Posterior cingulate gyrus (tissue), 11 donors: ENCODE measurements at regions of chr2 and their contacts with region 1.

Region 1: DNA sequence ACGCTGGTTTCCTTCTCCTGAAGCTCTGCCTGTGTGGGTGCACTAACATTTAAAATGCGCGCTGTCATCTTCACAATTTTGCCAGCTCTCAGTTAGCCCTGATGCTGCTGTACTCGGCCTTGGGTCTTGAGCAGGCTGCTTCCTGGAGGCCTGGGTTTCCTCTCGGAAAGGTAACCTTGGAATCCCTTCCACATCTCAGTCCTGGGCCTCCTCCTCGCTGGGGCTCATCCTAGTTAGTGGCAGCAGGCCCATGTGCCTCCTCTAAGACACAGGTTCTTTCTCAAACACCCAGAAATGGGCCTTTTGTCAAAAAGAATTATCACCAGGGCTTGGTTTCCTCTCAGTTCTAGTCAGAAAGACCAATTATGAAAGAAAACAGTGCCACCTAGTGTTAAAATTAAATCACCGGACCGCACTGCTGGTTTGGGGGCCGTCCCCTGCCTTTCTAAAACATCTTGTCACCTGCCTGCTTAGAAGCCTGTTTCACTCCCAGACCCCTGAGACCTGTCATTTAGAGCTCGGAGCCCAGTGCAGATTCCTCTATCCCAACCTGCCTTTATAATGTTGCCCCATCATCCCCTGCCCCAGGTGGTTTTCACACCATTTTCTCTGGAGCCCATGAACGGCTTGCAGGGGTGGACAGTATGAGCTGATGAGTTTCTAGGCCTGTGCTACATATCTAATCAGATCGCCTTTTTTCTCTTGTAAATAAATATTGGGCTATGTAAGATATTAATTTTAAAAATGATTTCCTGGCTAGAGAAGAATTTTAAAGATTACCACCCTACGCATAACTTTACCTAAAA is 42.4 kb downstream of the HK2 start:
- DNase-seq: peak in 5 of 10 donors; percentile 20 to 86 (median 28)

Region 2: GRCh38 chr2:74690571-74690970 is 185.7 kb before region 1 on chr2:
- intact Hi-C with region 1: loop called (anchors 1 kb)
- DNase-seq: peak in 1 of 10 donors; percentile 13

Region 3: DNA sequence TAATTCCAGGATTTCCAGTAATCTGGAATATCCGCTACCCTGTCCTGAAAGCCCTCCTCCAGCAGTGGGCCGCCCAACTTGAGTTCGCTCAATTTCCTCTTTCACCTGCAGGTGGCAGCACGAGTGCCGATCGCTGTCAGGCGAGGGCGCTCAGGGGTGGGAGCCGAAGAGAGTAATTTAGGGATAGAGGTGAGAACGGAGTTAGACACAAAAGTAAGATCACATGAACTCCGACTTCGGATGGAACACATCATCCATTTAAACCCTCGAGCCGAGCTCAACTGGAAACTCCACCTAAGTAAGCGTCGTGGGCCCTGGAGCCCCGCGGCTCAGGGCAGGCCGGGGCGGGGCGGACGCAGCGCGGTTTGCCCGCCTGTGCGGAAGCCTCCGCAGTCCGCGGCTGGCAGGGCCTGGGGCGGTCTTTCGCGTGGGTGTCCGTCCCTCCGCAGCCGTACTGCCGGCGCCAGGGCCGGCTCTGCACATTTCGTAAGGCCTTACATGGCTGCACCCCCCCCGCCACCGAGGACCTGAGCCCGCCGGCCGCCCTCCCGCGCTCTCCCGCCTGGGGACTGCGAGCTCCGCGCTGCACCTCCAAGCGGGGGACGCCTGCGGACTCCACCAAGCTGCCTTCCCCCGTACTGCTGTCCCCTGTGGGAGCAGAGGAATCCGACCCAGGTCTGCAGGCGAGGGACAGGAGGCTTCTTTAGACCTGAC is 161.0 kb before region 1 on chr2:
- intact Hi-C with region 1: loop called (anchors 1 kb)
- DNase-seq: peak; percentile 61 to 96 (median 82)